AG04450 (cell line): ENCODE measurements at regions of chr12 and their contacts with region 1.

Region 1: GRCh38 chr12:65536876-65537661 is 258.6 kb downstream of the MSRB3 start:
- DNase-seq: peak; percentile 99
- H3K4me3 ChIP-seq: no peak overlapping the region
- H3K27ac ChIP-seq: peak overlapping the region; percentile 93
- H3K27me3 ChIP-seq: no peaks in the 10 kb centered on the region
- CTCF ChIP-seq: no peak

Region 2: DNA sequence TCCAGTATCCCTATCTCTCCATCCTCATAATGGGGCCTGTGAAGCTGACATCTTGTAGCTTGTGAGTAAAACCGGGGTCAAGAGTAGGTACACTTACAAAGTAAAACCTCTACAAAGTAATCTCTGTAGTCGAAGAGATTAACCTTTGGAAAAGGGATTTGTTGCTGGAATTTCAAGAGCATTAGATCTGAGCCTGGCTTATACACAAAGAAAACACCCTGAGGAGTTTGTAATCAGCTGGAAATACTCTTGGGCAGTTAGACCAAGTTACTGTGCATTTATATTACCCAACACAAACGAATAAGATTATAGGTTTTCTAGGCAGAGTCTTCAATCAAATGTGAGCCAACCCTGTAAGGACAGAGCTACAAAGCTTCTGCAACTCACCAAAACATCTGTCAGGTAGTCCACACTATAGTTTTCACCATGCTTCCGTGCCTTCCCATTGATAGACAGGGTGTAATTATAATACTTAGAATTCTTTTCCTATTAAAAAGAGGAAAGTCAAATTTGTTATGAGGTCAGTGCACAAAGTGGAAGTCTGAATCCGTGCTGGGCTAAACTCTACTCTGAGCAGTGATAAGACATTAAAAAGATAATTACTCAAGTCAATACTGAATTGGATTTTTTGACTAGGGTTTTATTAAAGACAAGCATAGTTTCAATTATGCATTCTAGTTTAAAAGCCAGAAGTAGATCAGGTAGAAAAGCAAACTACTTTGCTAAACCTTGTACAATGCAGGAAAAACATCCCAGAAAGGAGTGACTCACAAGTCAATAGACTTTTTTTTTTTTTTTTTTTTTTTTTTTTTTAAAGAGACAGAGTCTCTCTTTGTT is 792.4 kb before region 1 on chr12:
- CTCF ChIA-PET with region 1: no interaction called
- POLR2A ChIA-PET with region 1: interaction called, 10 read pairs
- DNase-seq: no peak
- H3K4me3 ChIP-seq: no peak overlapping the region
- H3K27ac ChIP-seq: no peak overlapping the region
- H3K27me3 ChIP-seq: no peaks in the 10 kb centered on the region
- CTCF ChIP-seq: no peak

Region 3: DNA sequence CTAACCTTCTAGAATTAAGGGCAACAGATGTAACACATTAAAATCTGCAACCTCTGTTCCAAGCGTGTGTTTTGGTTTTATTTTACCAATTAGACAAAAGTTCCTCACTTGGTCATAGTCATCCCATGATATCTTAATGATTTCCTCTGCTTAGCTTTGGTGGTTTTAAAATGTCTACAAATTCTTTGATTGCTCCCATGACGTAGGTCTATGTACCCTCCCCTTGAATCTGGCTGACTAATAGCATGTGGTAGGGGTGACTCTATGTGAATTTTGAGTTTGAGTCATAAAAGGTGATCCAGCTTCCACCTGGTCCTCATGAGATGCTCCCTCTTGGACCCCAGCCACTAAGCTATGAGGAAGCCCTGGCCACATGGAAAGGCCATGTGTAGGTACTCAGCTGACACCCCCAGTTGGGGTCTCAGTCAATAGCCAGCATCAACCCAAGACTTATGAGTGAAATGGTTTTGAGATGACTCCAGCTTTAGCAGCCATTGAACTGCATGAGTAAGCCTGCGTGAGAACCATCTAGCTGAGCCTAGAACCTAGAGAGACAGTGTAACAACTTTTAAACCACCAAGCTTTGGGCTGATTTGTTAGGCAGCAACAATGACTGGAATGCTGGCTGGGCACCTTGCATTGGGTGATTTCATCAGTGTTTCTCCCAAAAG is 11.4 kb before region 1 on chr12:
- CTCF ChIA-PET with region 1: interaction called, 4 read pairs
- POLR2A ChIA-PET with region 1: interaction called, 17 read pairs
- DNase-seq: no peak
- H3K4me3 ChIP-seq: no peak overlapping the region
- H3K27ac ChIP-seq: peak overlapping the region; percentile 49
- H3K27me3 ChIP-seq: no peaks in the 10 kb centered on the region
- CTCF ChIP-seq: no peak

Region 4: GRCh38 chr12:65565601-65566560 is 28.8 kb after region 1 on chr12:
- CTCF ChIA-PET with region 1: interaction called, 5 read pairs
- POLR2A ChIA-PET with region 1: interaction called, 25 read pairs
- DNase-seq: peak; percentile 96
- H3K4me3 ChIP-seq: peak overlapping the region; percentile 45
- H3K27ac ChIP-seq: peak overlapping the region; percentile 97
- H3K27me3 ChIP-seq: no peaks in the 10 kb centered on the region
- CTCF ChIP-seq: peak; percentile 32

Region 5: DNA sequence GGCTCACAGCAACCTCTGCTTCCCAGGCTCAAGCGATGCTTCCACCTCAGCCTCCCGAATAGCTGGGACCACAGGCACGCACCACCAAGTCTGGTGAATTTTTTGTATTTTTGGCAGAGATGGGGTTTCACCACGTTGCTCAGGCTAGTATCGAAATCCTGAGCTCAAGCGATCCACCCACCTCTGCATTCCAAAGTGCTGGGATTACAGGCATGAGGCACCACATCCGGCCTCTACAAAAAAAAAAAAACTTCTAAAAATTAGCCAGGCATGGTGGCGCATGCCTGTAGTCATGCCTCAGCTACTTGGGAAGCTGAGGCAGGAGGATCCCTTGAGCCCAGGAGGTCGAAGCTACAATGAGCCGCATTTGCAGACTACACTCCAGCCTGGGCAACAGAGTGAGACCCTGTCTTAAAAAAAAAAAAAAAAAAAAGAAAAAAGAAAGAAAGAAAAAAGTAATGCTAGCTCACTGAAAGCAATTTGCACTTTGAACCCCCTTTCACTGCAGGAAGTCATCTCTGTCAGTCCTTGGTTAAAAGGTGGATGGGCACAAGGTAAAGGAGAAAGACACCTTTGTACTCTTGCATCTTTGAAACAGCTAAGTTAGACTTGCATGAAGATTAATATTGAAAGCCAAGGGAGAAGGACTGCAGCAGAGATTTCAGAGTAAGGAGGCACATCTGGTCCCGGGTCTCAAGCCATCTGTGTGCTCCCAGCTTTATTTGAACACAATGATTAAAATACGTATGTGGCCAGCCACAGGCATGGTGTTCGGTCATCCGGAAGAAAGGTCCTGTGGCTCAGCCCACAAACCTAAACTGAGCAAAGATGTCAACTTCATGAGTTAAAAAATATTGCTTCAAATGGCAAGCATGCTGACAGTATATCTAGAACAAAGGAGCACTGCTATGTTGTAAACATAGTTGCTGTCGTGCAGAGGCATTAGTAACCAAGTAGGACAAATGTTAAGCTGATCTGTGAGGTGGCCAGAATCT is 183.4 kb after region 1 on chr12:
- CTCF ChIA-PET with region 1: no interaction called
- POLR2A ChIA-PET with region 1: no interaction called
- DNase-seq: no peak
- H3K4me3 ChIP-seq: no peak overlapping the region
- H3K27ac ChIP-seq: no peak overlapping the region
- H3K27me3 ChIP-seq: no peaks in the 10 kb centered on the region
- CTCF ChIP-seq: no peak